T-cell (primary cell): ENCODE measurements at regions of chr22 and their contacts with region 1.

Region 1: GRCh38 chr22:42919199-42919598 is 62.1 kb upstream of the ARFGAP3 start:
- DNase-seq: no peak
- ATAC-seq: no peak
- H3K4me3 ChIP-seq: no peak overlapping the region
- H3K4me3 Mint-ChIP-seq: no peak overlapping the region
- H3K27ac ChIP-seq: no peak overlapping the region
- H3K27ac Mint-ChIP-seq: no peak overlapping the region
- H3K4me1 ChIP-seq: peaks cover 2 to 19% of the 10 kb centered on the region in 2 experiments
- H3K4me1 Mint-ChIP-seq: peaks cover 28 to 45% (median 44%) of the 10 kb centered on the region in 3 donors
- H3K27me3 ChIP-seq: no peaks in the 10 kb centered on the region
- H3K27me3 Mint-ChIP-seq: no peaks in the 10 kb centered on the region

Region 2: GRCh38 chr22:42343551-42344081 is 575.6 kb before region 1 on chr22:
- CTCF ChIA-PET with region 1: no interaction called
- POLR2A ChIA-PET with region 1: no interaction called
- DNase-seq: peak in 10 of 35 experiments; percentile 2 to 54 (median 24)
- ATAC-seq: peak; percentile 81 to 88 (median 84)
- H3K4me3 ChIP-seq: no peak overlapping the region
- H3K4me3 Mint-ChIP-seq: peak overlapping the region in 1 of 3 donors; percentile 57
- H3K27ac ChIP-seq: no peak overlapping the region
- H3K27ac Mint-ChIP-seq: no peak overlapping the region
- H3K4me1 ChIP-seq: peaks cover 0 to 26% of the 10 kb centered on the region in 2 experiments
- H3K4me1 Mint-ChIP-seq: peaks cover 16 to 23% (median 19%) of the 10 kb centered on the region in 3 donors
- H3K27me3 ChIP-seq: peaks cover 0 to 22% of the 10 kb centered on the region in 2 experiments
- H3K27me3 Mint-ChIP-seq: peaks cover 0 to 4% of the 10 kb centered on the region in 2 donors

Region 3: GRCh38 chr22:42780070-42780540 is 139.1 kb before region 1 on chr22:
- CTCF ChIA-PET with region 1: no interaction called
- POLR2A ChIA-PET with region 1: no interaction called
- DNase-seq: peak in 24 of 35 experiments; percentile 3 to 82 (median 34)
- ATAC-seq: peak; percentile 52 to 75 (median 62)
- H3K4me3 ChIP-seq: no peak overlapping the region
- H3K4me3 Mint-ChIP-seq: no peak overlapping the region
- H3K27ac ChIP-seq: no peak overlapping the region
- H3K27ac Mint-ChIP-seq: no peak overlapping the region
- H3K4me1 ChIP-seq: peaks cover 0 to 3% of the 10 kb centered on the region in 2 experiments
- H3K4me1 Mint-ChIP-seq: peaks cover 0 to 2% (median 2%) of the 10 kb centered on the region in 3 donors
- H3K27me3 ChIP-seq: no peaks in the 10 kb centered on the region
- H3K27me3 Mint-ChIP-seq: no peaks in the 10 kb centered on the region

Region 4: DNA sequence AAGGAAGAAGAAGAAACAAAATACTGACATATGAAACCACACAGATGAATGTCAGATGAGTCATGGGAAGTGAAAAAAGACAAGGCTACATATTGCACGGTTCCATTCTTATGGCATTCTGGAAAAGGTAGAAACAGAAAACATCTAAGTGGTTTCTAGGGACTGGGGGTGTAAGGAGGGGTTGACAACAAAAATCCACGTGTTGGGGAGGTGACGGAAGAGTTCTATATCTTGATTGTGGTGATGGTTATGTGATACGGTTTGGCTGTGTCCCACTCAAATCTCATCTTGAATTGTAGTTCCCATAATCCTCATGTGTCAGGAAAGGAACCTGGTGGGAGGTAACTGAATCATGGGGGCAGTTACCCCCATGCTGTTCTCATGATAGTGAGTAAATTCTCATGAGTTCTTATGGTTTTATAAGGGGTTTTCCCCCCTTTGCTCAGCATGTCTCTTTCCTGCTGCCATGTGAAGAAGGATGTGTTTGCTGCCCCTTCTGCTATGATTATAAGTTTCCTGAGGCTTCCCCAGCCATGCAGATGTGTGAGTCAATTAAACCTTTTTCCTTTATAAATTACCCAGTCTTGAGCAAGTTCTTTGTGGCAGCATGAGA is 55.7 kb before region 1 on chr22:
- CTCF ChIA-PET with region 1: interaction called in 1 of 2 experiments, 10 read pairs
- POLR2A ChIA-PET with region 1: no interaction called
- DNase-seq: peak in 1 of 35 experiments; percentile 6
- ATAC-seq: no peak
- H3K4me3 ChIP-seq: no peak overlapping the region
- H3K4me3 Mint-ChIP-seq: peak overlapping the region in 1 of 3 donors; percentile 26
- H3K27ac ChIP-seq: no peak overlapping the region
- H3K27ac Mint-ChIP-seq: peak overlapping the region; percentile 73 to 83
- H3K4me1 ChIP-seq: no peaks in the 10 kb centered on the region
- H3K4me1 Mint-ChIP-seq: peaks cover 7 to 22% (median 14%) of the 10 kb centered on the region in 3 donors
- H3K27me3 ChIP-seq: no peaks in the 10 kb centered on the region
- H3K27me3 Mint-ChIP-seq: no peaks in the 10 kb centered on the region

Region 5: GRCh38 chr22:42994881-42995562 is 75.8 kb after region 1 on chr22:
- CTCF ChIA-PET with region 1: no interaction called
- POLR2A ChIA-PET with region 1: no interaction called
- DNase-seq: no peak
- ATAC-seq: no peak
- H3K4me3 ChIP-seq: no peak overlapping the region
- H3K4me3 Mint-ChIP-seq: no peak overlapping the region
- H3K27ac ChIP-seq: no peak overlapping the region
- H3K27ac Mint-ChIP-seq: no peak overlapping the region
- H3K4me1 ChIP-seq: peaks cover 0 to 24% of the 10 kb centered on the region in 2 experiments
- H3K4me1 Mint-ChIP-seq: peaks cover 37 to 57% (median 49%) of the 10 kb centered on the region in 3 donors
- H3K27me3 ChIP-seq: no peaks in the 10 kb centered on the region
- H3K27me3 Mint-ChIP-seq: no peaks in the 10 kb centered on the region